ENCODE measurements at regions of chr11 and their contacts with region 1.

Region 1: GRCh38 chr11:113715882-113716625 is 9.9 kb upstream of the TMPRSS5 start:
- DNase-seq: no peak
- H3K4me3 ChIP-seq: no peak overlapping the region
- H3K27ac ChIP-seq: no peak overlapping the region
- H3K4me1 ChIP-seq: no peaks in the 10 kb centered on the region
- H3K27me3 ChIP-seq: no peaks in the 10 kb centered on the region
- CTCF ChIP-seq: no peak

Region 2: DNA sequence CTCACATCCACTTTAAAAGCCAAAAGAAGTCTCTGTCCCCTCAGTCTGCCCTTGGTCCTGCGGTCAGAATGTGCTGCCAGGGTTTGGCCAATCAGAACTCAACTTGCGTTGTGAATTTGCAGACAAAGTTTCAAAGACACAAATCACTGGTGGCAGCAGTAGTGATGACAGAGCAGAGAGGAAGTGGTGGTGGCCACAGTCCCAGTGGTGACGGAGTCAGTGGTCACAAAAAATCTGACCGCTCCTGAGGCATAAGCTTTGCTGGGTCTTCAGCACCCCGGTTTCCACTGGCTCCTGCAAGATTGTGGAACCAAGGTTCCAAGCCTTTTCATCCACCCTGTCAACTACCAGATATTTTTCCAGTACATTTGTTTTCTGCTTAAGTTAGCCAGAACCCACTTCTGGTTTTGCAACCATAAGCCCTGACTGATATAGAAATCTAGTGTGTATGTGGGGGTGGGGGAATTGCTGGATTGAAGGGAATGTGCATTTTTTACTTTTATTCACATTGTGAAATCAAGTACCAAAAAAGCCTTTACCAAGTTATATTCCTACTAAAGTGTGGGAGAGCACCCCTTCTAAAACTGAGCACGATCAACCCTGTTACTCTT is 122.3 kb before region 1 on chr11:
- intact Hi-C with region 1: no loop called
- DNase-seq: no peak
- H3K4me3 ChIP-seq: no peak overlapping the region
- H3K27ac ChIP-seq: no peak overlapping the region
- H3K4me1 ChIP-seq: no peaks in the 10 kb centered on the region
- H3K27me3 ChIP-seq: no peaks in the 10 kb centered on the region
- CTCF ChIP-seq: no peak

Region 3: DNA sequence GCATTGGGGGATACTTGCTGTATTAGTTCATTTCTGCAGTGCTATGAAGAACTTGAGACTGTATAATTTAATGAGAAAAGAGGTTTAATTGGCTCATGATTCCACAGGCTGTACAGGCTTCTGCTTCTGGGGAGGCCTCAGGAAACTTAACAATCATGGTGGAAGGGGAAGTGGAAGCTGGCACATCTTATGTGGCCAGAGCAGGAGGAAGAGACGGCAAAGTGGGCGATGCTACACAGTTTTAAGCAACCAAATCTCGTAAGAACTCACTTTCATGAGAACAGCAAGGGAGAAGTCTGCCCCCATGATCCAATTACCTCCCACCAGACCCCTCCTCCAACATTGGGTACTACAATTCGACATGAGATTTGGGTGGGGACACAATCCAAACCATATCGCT is 65.0 kb before region 1 on chr11:
- intact Hi-C with region 1: loop called (anchors 10 kb)
- DNase-seq: no peak
- H3K4me3 ChIP-seq: no peak overlapping the region
- H3K27ac ChIP-seq: no peak overlapping the region
- H3K4me1 ChIP-seq: no peaks in the 10 kb centered on the region
- H3K27me3 ChIP-seq: no peaks in the 10 kb centered on the region
- CTCF ChIP-seq: no peak

Measured in colonic mucosa (tissue), 4 donors.